ENCODE measurements at regions of chr16 and their contacts with region 1.

Region 1: DNA sequence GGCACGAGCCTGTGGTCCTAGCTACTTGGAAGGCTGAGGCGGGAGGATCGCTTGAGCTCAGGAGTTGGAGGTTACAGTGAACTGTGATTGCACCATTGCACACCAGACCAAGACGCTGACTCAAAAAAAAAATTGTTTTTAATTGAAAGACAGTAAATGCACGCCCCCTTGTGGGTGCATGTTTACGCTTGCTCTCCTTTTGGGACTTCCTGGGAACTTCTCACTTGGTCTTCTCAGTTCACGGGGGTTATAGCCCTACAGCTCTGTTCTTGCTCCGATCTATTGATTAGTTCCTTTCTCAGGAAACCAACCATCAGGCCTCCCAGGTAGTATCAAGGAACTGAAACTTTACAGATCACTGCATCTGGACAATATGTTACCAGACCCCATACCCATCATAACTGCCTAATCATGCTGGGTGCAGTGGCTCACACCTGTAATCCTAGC is 14.2 kb upstream of the RIPOR1 start:
- DNase-seq: peak; percentile 63 to 90 (median 74)
- ATAC-seq: peak; percentile 79 to 80
- H3K4me3 Mint-ChIP-seq: no peak overlapping the region
- H3K27ac Mint-ChIP-seq: peak overlapping the region in 4 of 10 donors; percentile 23 to 80 (median 70)
- H3K4me1 Mint-ChIP-seq: peaks cover 11 to 57% (median 43%) of the 10 kb centered on the region in 4 donors
- H3K27me3 Mint-ChIP-seq: no peaks in the 10 kb centered on the region

Region 2: DNA sequence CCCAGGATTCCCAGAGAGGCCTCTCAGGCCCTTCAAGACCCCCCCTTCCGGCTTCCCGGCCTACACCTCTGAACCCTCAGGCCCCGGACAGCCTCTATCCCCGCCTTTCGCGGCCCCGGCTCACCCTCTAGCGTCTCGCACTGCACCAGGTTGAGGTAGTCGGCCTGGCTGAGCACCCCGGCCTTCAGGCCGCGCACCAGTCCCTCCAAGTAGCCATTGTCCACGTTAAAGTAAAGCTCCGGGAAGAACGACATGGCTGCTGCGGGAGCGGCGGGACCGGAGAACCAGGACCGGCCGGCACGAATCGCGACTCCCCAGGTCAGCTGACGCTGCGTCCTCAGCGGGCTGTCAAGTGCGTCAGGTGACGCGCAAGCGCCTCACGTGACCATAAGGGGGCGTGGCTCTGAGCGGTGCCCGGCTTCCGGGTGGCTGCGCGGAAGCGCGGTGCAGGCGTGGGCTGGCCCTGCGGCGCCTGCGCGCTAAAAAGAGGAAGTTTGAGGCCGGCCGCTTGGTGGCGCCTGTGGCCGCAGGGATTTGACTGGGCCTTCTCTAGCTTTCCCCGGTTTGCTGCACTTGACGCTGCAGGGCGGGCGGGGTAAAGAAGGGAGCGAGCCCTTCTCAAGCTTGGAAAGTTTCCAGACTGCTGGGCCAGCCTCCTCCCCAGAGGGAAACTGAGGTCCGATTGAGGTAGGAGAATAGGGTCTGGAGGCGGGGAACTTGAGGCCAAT is 33.4 kb before region 1 on chr16 and contains the start of gene ATP6V0D1:
- POLR2A ChIA-PET with region 1: interaction called, 33 read pairs
- DNase-seq: peak; percentile 97 to 99 (median 98)
- ATAC-seq: peak; percentile 83 to 91
- H3K4me3 Mint-ChIP-seq: peak within 1 kb of the TSS; percentile 95 to 100 (median 98)
- H3K27ac Mint-ChIP-seq: peak within 1 kb of the TSS; percentile 89 to 100 (median 98)
- H3K4me1 Mint-ChIP-seq: peaks cover 18 to 70% (median 53%) of the 10 kb centered on the region in 4 donors
- H3K27me3 Mint-ChIP-seq: no peaks in the 10 kb centered on the region
- polyA plus RNA-seq, gene ATP6V0D1: 74.7 to 89.6 (median 77.5) TPM

Region 3: DNA sequence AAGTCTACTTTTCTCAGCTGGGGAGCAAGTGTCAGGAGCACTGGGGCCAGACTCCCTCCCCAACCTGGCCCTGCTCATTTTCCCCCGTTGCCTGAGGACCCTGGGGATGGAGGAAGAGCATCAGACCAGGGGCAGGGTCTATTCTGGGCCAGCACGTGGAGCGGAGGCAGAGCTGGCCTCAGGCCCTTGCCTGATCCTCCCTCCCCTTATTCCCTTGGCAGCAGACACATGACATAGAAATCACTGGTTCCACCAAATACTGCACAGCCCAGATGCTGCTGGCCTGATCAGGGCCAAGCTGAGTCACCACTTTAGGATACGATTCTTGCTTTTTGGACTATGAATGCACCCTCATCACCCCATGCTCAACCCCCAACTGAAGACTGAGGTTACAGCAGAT is 15.3 kb before region 1 on chr16:
- POLR2A ChIA-PET with region 1: interaction called, 12 read pairs
- DNase-seq: no peak
- ATAC-seq: no peak
- H3K4me3 Mint-ChIP-seq: no peak overlapping the region
- H3K27ac Mint-ChIP-seq: peak overlapping the region in 9 of 10 donors; percentile 24 to 69 (median 53)
- H3K4me1 Mint-ChIP-seq: peaks cover 9 to 26% (median 18%) of the 10 kb centered on the region in 4 donors
- H3K27me3 Mint-ChIP-seq: no peaks in the 10 kb centered on the region

Region 4: GRCh38 chr16:67504041-67505021 is 10.1 kb before region 1 on chr16:
- POLR2A ChIA-PET with region 1: interaction called, 10 read pairs
- DNase-seq: peak in 5 of 10 donors; percentile 27 to 37 (median 34)
- ATAC-seq: peak; percentile 60 to 80
- H3K4me3 Mint-ChIP-seq: peak overlapping the region; percentile 29 to 80 (median 62)
- H3K27ac Mint-ChIP-seq: peak overlapping the region; percentile 89 to 97 (median 94)
- H3K4me1 Mint-ChIP-seq: peaks cover 29 to 61% (median 50%) of the 10 kb centered on the region in 4 donors
- H3K27me3 Mint-ChIP-seq: no peaks in the 10 kb centered on the region

Region 5: DNA sequence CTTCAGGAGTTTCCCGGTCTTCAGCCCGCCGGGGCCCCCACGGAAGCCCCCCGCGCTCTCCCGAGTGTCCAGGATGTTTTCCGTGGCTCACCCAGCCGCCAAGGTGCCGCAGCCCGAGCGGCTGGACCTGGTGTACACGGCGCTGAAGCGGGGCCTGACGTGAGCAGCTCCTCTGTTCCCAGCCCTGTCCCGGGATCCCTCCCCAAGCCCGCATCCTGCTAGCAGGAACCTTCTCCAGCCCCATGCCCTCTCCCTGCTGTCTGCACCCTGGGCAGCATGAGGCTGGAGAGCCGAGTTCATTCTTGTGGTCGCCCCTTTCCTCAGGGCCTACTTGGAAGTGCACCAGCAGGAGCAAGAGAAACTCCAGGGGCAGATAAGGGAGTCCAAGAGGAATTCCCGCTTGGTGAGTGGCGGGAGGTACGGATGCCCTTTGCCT is 24.3 kb after region 1 on chr16:
- POLR2A ChIA-PET with region 1: no interaction called
- DNase-seq: no peak
- ATAC-seq: no peak
- H3K4me3 Mint-ChIP-seq: peak overlapping the region; percentile 69 to 87 (median 77)
- H3K27ac Mint-ChIP-seq: peak overlapping the region; percentile 69 to 90 (median 78)
- H3K4me1 Mint-ChIP-seq: peaks cover 37 to 59% (median 53%) of the 10 kb centered on the region in 4 donors
- H3K27me3 Mint-ChIP-seq: no peaks in the 10 kb centered on the region